Sigmoid colon (tissue), 7 donors: ENCODE measurements at regions of chr7 and their contacts with region 1.

Region 1: GRCh38 chr7:89129600-89130375 is 334.3 kb upstream of the TEX47 start:
- DNase-seq: no peak
- H3K4me3 ChIP-seq: no peak overlapping the region
- H3K27ac ChIP-seq: no peak overlapping the region
- H3K4me1 ChIP-seq: no peaks in the 10 kb centered on the region
- H3K27me3 ChIP-seq: no peaks in the 10 kb centered on the region
- CTCF ChIP-seq: no peak
- EP300 ChIP-seq: no peak
- POLR2A ChIP-seq: no peak

Region 2: GRCh38 chr7:89183712-89184111 is 53.9 kb after region 1 on chr7:
- intact Hi-C with region 1: loop called (anchors 2 kb)
- DNase-seq: no peak
- H3K4me3 ChIP-seq: no peak overlapping the region
- H3K27ac ChIP-seq: no peak overlapping the region
- H3K4me1 ChIP-seq: no peaks in the 10 kb centered on the region
- H3K27me3 ChIP-seq: no peaks in the 10 kb centered on the region
- CTCF ChIP-seq: no peak
- EP300 ChIP-seq: no peak
- POLR2A ChIP-seq: no peak